Activated CD4-positive, alpha-beta memory T cell treated with anti-CD3 and anti-CD28 coated beads for 36 hours (primary cell): ENCODE measurements at regions of chr11 and their contacts with region 1.

Region 1: DNA sequence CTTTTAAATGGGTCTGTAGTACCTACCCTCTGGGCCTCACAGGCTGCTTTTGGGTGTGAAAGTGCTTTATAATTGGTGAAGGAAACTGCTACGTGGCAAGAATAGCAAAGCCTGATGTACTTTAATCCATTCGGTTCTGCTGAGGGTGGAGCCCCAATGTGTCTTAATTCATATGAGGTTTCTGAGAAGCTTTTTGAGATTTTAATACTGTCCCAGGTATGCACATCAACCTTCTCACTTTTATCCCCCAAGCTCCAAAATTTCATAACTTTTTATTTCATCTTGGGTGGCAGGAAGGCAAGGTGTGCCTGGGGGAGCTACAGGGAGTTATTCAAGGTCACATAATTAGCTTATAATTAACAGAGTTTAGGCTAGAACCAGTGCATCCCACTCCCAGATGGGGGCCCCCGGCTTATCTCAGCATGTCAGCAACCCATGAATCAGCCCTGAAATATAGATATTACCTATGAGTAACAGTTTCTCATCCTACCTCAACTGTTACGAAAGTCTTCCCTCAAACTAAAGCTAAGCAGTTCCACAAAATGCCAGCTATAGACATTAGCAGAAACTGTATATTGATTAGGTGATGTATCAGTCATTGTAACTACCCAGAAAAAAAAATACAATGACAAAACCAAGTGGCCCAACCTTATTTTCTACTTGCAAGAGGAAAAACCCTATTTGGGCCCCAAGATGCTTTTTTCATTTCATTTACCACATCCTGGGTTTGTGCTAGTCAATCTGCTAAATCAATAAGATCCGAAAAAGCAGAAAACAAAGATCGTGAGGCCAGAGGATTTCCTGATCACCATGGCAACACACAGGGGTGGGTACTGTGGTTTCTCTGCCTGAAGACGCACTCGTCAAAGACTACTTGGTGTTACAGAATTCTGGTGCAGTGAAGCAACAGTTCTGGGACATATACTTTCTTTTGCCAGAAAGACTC is 26.7 kb downstream of the CD44 start:
- DNase-seq: peak; percentile 95
- H3K4me3 Mint-ChIP-seq: peak overlapping the region; percentile 71
- H3K27ac Mint-ChIP-seq: peak overlapping the region; percentile 99
- H3K4me1 Mint-ChIP-seq: peaks cover 99% of the 10 kb centered on the region
- H3K27me3 Mint-ChIP-seq: no peaks in the 10 kb centered on the region

Region 2: DNA sequence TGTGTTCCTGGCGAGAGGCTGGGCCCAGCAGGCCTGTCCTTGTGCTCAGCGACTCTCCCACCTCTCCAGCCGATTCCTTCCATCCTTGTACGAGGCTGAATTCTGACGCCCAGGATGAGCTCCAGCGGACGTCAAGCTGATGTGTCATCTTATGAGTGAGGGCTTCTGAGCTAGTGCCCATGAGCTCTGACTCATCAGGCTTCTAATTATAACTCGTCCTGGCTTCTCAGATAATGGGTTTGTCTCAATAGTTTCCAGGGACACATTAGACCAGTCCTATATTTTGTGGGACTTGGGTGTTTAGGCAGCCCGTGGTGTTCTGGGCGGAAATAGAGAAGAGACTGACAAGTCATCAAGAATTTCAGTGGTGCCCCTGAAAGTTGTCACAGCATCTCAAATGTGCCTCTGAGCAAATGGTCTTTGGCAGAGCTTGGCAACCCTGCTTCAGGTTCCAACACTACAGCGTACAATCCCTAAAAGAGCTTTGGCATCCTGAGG is 134.9 kb before region 1 on chr11:
- CTCF ChIA-PET with region 1: interaction called, 3 read pairs
- POLR2A ChIA-PET with region 1: interaction called, 5 read pairs
- intact Hi-C with region 1: loop called (anchors 1 kb)
- DNase-seq: peak; percentile 68
- H3K4me3 Mint-ChIP-seq: peak overlapping the region; percentile 69
- H3K27ac Mint-ChIP-seq: peak overlapping the region; percentile 90
- H3K4me1 Mint-ChIP-seq: peaks cover 46% of the 10 kb centered on the region
- H3K27me3 Mint-ChIP-seq: no peaks in the 10 kb centered on the region

Region 3: GRCh38 chr11:35138943-35139721 is 26.6 kb before region 1 on chr11 and contains the start of gene CD44:
- CTCF ChIA-PET with region 1: interaction called, 35 read pairs
- POLR2A ChIA-PET with region 1: interaction called, 45 read pairs
- intact Hi-C with region 1: no loop called
- DNase-seq: peak; percentile 83
- H3K4me3 Mint-ChIP-seq: peak within 1 kb of the TSS; percentile 88
- H3K27ac Mint-ChIP-seq: peak within 1 kb of the TSS; percentile 97
- H3K4me1 Mint-ChIP-seq: peaks cover 48% of the 10 kb centered on the region
- H3K27me3 Mint-ChIP-seq: no peaks in the 10 kb centered on the region
- total RNA-seq, gene CD44: 440 to 442 TPM

Region 4: DNA sequence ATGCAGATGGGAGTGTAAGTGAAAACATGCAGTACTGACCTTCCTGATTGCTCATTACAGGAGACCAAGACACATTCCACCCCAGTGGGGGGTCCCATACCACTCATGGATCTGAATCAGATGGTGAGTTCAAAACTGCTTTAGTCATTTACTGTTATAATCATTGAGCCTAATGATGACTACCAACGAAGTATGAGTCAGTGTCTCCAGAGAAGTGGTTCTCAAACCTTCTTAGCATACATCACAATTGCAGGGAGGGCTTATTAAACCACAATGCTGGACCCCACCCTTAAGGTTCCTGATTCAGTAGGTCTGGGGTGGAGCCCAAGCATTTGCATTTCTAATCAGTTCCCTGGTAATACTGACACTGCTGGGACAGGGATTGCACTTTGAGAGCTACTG is 49.1 kb after region 1 on chr11:
- CTCF ChIA-PET with region 1: no interaction called
- POLR2A ChIA-PET with region 1: no interaction called
- intact Hi-C with region 1: loop called (anchors 1 kb)
- DNase-seq: peak; percentile 78
- H3K4me3 Mint-ChIP-seq: no peak overlapping the region
- H3K27ac Mint-ChIP-seq: peak overlapping the region; percentile 81
- H3K4me1 Mint-ChIP-seq: peaks cover 74% of the 10 kb centered on the region
- H3K27me3 Mint-ChIP-seq: no peaks in the 10 kb centered on the region

Region 5: DNA sequence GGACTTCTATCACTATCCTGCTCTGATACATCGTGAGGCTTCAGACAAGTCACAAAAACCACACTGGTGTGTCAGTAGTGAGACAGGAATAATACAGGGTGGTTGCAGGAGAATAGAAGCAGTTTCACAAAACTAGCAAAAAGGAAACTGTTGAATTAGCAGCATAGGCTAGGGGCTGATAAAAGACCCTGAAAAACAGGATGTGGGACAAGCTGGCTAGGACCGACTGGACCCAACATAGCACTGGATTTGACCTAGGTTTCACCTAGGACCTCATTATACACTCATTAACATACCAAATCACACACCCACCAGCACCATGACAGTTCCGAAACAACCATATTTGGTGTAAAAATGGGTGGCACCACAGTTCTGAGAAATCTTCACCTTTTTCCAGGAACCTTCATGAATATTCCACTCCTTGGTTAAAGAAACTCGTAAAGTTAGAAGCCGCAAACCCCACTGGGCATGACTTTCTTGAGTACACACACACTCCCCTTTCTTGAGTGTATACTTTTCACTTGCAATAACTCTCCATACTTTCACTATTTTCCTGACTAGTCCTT is 177.4 kb after region 1 on chr11:
- CTCF ChIA-PET with region 1: no interaction called
- POLR2A ChIA-PET with region 1: no interaction called
- intact Hi-C with region 1: loop called (anchors 1 kb)
- DNase-seq: peak; percentile 58
- H3K4me3 Mint-ChIP-seq: peak overlapping the region; percentile 42
- H3K27ac Mint-ChIP-seq: peak overlapping the region; percentile 66
- H3K4me1 Mint-ChIP-seq: peaks cover 42% of the 10 kb centered on the region
- H3K27me3 Mint-ChIP-seq: peaks cover 2% of the 10 kb centered on the region